SK-N-SH (cell line): ENCODE measurements at regions of chr15 and their contacts with region 1.

Region 1: GRCh38 chr15:81274931-81275707 is 48.8 kb downstream of the STARD5 start:
- DNase-seq: peak; percentile 74
- H3K4me3 ChIP-seq: no peak overlapping the region; a peak in 1 of 4 replicates
- H3K27ac ChIP-seq: no peak overlapping the region
- H3K4me1 ChIP-seq: no peaks in the 10 kb centered on the region; a peak in 1 of 4 replicates
- H3K27me3 ChIP-seq: peaks cover 15% of the 10 kb centered on the region; the same call in 1 of the 2 replicates
- CTCF ChIP-seq: peak; percentile 74
- EP300 ChIP-seq: no peak
- RAD21 ChIP-seq: peak; percentile 96

Region 2: GRCh38 chr15:81155375-81156218 is 119.5 kb before region 1 on chr15:
- CTCF ChIA-PET with region 1: interaction called, 395 read pairs
- POLR2A ChIA-PET with region 1: no interaction called
- DNase-seq: peak; percentile 46
- H3K4me3 ChIP-seq: no peak overlapping the region
- H3K27ac ChIP-seq: no peak overlapping the region
- H3K4me1 ChIP-seq: peaks cover 0 to 9% of the 10 kb centered on the region in 2 experiments; a peak in 1 of 4 replicates
- H3K27me3 ChIP-seq: no peaks in the 10 kb centered on the region
- CTCF ChIP-seq: peak; percentile 55
- EP300 ChIP-seq: no peak
- RAD21 ChIP-seq: peak; percentile 82

Region 3: GRCh38 chr15:81293728-81294515 is 18.8 kb after region 1 on chr15:
- CTCF ChIA-PET with region 1: interaction called, 22 read pairs
- POLR2A ChIA-PET with region 1: no interaction called
- DNase-seq: peak; percentile 50
- H3K4me3 ChIP-seq: no peak overlapping the region
- H3K27ac ChIP-seq: no peak overlapping the region
- H3K4me1 ChIP-seq: peaks cover 7 to 9% of the 10 kb centered on the region in 2 experiments; a peak in 2 of 4 replicates
- H3K27me3 ChIP-seq: peaks cover 10% of the 10 kb centered on the region
- CTCF ChIP-seq: no peak
- EP300 ChIP-seq: no peak
- RAD21 ChIP-seq: no peak

Region 4: GRCh38 chr15:81386947-81387346 is 111.8 kb after region 1 on chr15:
- CTCF ChIA-PET with region 1: interaction called, 43 read pairs
- POLR2A ChIA-PET with region 1: no interaction called
- DNase-seq: no peak
- H3K4me3 ChIP-seq: no peak overlapping the region
- H3K27ac ChIP-seq: no peak overlapping the region
- H3K4me1 ChIP-seq: peaks cover 0 to 7% of the 10 kb centered on the region in 2 experiments; a peak in 2 of 4 replicates
- H3K27me3 ChIP-seq: peaks cover 3% of the 10 kb centered on the region; the same call in 1 of the 2 replicates
- CTCF ChIP-seq: no peak
- EP300 ChIP-seq: no peak
- RAD21 ChIP-seq: no peak

Region 5: DNA sequence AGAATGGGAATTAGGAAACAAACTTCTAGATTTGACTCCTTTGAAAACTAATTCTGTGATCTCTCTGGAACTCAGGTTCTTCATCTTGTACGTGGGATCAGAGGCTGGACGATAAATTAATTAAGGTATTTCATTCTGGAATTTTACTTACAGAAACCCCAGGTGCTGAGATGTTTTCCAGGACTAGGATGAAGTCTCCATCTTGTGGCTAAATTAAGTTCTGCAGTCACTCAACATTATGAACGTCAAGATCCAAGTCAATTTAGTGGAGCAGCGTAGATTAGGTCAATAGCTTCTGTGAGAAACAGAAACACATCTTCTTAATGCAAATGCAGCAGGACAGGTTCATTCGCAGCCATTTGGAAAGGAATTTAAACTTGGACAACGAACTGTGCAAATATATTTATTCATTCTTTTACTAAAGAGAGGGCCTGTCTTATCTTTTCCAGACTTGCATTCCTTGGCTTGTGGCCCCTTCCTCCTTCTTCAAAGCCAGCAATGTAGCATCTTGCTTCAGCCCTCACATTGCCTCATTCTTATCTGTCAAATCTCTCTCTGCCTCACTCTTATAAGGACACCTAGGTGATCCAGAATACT is 125.6 kb after region 1 on chr15:
- CTCF ChIA-PET with region 1: interaction called, 173 read pairs
- POLR2A ChIA-PET with region 1: no interaction called
- DNase-seq: peak; percentile 52
- H3K4me3 ChIP-seq: peak overlapping the region in 1 of 2 experiments; percentile 2; a peak in 1 of 4 replicates
- H3K27ac ChIP-seq: no peak overlapping the region
- H3K4me1 ChIP-seq: no peaks in the 10 kb centered on the region
- H3K27me3 ChIP-seq: no peaks in the 10 kb centered on the region
- CTCF ChIP-seq: peak; percentile 83
- EP300 ChIP-seq: no peak
- RAD21 ChIP-seq: peak; percentile 91